Pancreas (tissue), 10 donors: ENCODE measurements at regions of chr19 and their contacts with region 1.

Region 1: DNA sequence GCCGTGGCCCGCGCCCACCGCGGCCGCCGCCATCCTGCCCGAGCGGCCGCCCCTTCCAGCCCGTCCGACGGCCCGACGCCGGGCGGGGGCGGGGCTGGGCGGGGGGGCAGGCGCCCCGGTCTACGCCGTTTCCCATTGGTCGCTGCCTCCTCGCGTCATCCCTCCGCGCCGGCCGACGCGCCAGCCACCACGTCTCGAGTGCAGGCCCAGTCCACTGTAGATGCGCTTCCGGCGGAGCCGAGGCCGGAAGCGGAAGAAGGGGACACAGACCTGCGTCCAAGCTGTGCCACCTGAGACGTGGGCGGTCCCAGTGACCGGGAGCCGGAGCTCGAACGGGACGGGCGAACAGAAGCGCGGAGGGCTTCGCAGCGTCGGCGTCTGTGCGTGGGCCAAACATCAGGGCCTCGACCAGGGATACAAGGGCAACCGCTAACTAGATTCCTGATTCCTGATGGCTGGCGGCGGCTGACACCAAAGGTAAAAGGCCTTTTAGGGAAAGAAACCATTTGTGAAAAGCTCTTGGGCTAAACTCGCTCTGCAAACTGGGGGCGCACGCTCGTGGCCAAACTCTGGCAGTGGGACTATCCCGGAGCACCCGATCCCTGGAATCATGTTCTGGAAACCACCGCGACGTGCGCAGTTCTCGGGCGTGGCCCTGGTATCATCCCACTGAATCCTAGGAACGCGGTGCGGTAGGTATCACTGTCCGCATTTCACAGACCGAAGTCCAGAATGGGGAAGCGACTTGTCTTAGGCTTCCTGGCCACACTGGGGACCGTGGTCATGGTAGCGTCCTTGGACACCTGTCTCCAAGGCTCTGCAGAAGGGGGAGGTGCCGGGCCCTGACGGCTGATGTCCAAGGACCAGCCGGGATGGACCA is at the start of gene SLC35E1:
- DNase-seq: peak; percentile 96 to 99 (median 97)
- ATAC-seq: peak; percentile 93 to 97 (median 94)
- H3K4me3 ChIP-seq: peak within 1 kb of the TSS; percentile 87 to 97 (median 92)
- H3K27ac ChIP-seq: peak within 1 kb of the TSS; percentile 76 to 87 (median 78)
- H3K4me1 ChIP-seq: peaks cover 11 to 38% (median 23%) of the 10 kb centered on the region in 3 donors
- H3K27me3 ChIP-seq: no peaks in the 10 kb centered on the region
- CTCF ChIP-seq: no peak
- total RNA-seq, gene SLC35E1: 32.1 to 42.1 (median 35.5) TPM

Region 2: GRCh38 chr19:16628183-16628983 is 55.8 kb after region 1 on chr19 and contains the start of gene MED26:
- intact Hi-C with region 1: loop called in 2 of 3 experiments (anchors 10 kb)
- DNase-seq: peak; percentile 91 to 100 (median 98)
- ATAC-seq: peak; percentile 90 to 95 (median 93)
- H3K4me3 ChIP-seq: peak within 1 kb of the TSS; percentile 83 to 98 (median 92)
- H3K27ac ChIP-seq: peak within 1 kb of the TSS; percentile 81 to 95 (median 92)
- H3K4me1 ChIP-seq: peaks cover 16 to 34% (median 31%) of the 10 kb centered on the region in 3 donors
- H3K27me3 ChIP-seq: no peaks in the 10 kb centered on the region
- CTCF ChIP-seq: no peak
- total RNA-seq, gene MED26: 3.9 to 7.1 (median 4.4) TPM